ENCODE measurements at regions of chr15 and their contacts with region 1.

Region 1: DNA sequence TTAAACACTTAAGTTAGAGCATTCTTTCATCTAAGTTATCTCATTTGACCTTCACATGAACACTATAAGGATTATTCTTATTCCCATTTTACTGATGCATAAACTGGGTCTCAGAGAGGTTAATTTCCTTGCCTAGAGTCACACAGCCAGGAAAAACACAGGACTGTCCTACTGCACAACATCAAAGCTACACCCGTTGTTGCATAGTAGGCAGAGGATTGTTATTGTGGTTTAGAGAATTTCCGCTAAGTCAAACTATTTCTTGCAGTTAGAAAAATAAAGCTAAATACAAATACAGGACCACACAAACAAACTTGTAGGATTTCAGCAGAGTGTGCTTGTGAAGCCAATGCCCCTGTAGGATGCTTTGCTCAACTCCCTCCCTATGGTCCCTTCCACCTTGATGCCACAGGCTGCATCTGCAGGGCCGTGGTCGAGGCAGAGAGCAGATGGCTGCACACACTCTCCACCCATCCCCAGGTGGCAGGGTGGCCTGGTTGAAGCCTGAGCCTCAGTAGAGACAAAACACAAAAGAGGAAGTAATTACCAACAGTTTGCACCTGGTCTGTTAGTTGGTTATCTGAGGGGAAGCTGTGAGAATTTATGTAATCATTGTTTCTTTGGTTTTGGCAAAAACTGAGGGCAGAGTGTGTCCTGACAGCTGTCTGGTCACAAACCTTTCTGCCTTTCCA is 41.1 kb upstream of the SKOR1 start:
- DNase-seq: peak; percentile 60
- ATAC-seq: peak; percentile 81
- H3K4me3 Mint-ChIP-seq: peak overlapping the region; percentile 38
- H3K27ac Mint-ChIP-seq: peak overlapping the region; percentile 87
- H3K4me1 Mint-ChIP-seq: peaks cover 50% of the 10 kb centered on the region
- H3K27me3 Mint-ChIP-seq: no peaks in the 10 kb centered on the region
- CTCF ChIP-seq: no peak

Region 2: DNA sequence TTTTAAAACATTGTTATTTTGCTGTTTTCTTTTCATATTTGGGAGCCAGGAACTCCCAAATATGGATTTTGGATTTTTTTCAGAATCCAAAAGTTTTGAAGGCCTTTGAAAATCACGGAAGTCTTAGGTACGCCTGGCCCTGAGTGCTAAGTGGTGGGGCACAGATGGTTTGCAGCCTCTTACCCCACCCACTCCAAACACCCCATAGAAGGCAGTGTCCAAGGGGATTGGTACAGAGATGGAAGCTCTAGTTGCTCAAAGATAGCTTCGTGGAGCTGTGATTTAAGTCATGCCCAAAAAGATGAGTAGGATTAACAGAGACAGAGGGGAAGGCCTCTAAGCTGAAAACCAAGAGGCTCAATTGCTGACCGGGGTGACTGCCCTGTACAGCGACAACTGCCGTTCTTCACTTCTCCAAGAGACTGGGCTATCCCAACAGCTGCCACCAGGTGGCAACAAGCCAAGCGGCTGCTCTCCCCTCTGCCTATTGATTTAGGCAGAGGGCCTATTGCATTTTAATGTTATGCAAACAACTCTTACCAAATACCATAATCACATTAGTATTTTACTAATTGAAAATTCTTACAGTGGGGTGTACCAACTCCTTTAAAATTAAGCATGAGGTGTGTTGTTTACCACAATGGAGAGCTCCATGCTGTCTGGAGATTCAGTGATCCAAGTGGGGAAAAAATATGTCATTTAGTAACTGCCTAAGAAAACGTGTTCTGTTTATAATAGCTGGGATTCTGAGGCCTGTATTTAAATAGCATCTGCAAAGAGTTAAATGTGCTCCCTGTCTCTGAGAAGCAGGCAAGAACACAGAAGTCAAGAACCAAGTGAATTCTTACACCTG is 327.3 kb before region 1 on chr15:
- CTCF ChIA-PET with region 1: interaction called, 13 read pairs
- POLR2A ChIA-PET with region 1: no interaction called
- intact Hi-C with region 1: loop called (anchors 1 kb)
- DNase-seq: peak; percentile 70
- ATAC-seq: peak; percentile 97
- H3K4me3 Mint-ChIP-seq: no peak overlapping the region
- H3K27ac Mint-ChIP-seq: no peak overlapping the region
- H3K4me1 Mint-ChIP-seq: no peaks in the 10 kb centered on the region
- H3K27me3 Mint-ChIP-seq: peaks cover 4% of the 10 kb centered on the region
- CTCF ChIP-seq: peak; percentile 85

Region 3: GRCh38 chr15:67521029-67521811 is 263.0 kb before region 1 on chr15 and contains the start of gene C15orf61:
- CTCF ChIA-PET with region 1: no interaction called
- POLR2A ChIA-PET with region 1: interaction called, 4 read pairs
- intact Hi-C with region 1: loop called (anchors 1 kb)
- DNase-seq: peak; percentile 88
- ATAC-seq: peak; percentile 81
- H3K4me3 Mint-ChIP-seq: peak within 1 kb of the TSS; percentile 93
- H3K27ac Mint-ChIP-seq: peak within 1 kb of the TSS; percentile 92
- H3K4me1 Mint-ChIP-seq: peaks cover 22% of the 10 kb centered on the region
- H3K27me3 Mint-ChIP-seq: no peaks in the 10 kb centered on the region
- CTCF ChIP-seq: no peak
- total RNA-seq, gene C15orf61: 3.3 and 4.2 TPM in 2 replicates

Region 4: GRCh38 chr15:67542420-67543347 is 241.6 kb before region 1 on chr15 and contains the start of gene MAP2K5:
- CTCF ChIA-PET with region 1: no interaction called
- POLR2A ChIA-PET with region 1: no interaction called
- intact Hi-C with region 1: loop called (anchors 2 kb)
- DNase-seq: peak; percentile 76
- ATAC-seq: peak; percentile 73
- H3K4me3 Mint-ChIP-seq: peak within 1 kb of the TSS; percentile 94
- H3K27ac Mint-ChIP-seq: peak within 1 kb of the TSS; percentile 94
- H3K4me1 Mint-ChIP-seq: peaks cover 56% of the 10 kb centered on the region
- H3K27me3 Mint-ChIP-seq: peaks cover 5% of the 10 kb centered on the region
- CTCF ChIP-seq: no peak
- total RNA-seq, gene MAP2K5: 18.9 and 26.7 TPM in 2 replicates

Region 5: DNA sequence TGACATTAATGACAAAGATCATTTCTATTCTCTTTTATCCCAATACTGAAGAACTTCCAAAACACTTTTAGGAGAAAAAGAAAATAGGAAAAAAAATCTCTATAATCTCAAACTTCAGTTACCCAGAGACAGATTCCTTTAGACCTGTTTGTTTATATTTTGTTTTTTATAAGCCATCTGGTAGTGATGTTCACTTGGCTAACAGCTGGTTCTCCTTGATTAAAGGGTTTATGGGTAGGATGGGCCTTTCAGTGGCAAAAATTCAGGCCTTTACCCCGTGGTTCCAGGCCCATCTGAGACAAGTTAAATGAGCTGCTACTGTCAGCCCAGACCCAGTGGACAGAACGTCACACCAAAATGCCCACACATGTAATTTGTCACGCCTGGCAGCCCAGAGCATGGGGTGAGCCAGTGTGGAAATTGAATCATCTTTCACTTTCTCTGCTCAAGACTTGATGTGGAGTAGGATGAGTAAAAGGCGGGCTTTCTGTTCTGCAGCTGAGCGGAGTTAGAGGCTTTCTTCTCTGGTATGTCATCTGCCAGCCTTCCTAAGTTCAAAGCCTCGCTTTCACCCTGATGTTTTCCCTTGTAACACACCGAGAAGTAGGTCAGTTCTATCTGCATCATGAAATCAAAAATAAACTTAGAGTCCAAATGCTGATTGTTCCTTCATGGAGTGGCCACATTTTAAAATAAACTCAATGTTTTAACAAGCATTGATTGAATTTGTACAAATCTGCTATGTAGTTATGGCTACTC is 21.4 kb before region 1 on chr15:
- CTCF ChIA-PET with region 1: interaction called, 3 read pairs
- POLR2A ChIA-PET with region 1: interaction called, 4 read pairs
- intact Hi-C with region 1: loop called (anchors 2 kb)
- DNase-seq: no peak
- ATAC-seq: peak; percentile 82
- H3K4me3 Mint-ChIP-seq: peak overlapping the region; percentile 66
- H3K27ac Mint-ChIP-seq: peak overlapping the region; percentile 65
- H3K4me1 Mint-ChIP-seq: peaks cover 67% of the 10 kb centered on the region
- H3K27me3 Mint-ChIP-seq: no peaks in the 10 kb centered on the region
- CTCF ChIP-seq: no peak

Region 6: DNA sequence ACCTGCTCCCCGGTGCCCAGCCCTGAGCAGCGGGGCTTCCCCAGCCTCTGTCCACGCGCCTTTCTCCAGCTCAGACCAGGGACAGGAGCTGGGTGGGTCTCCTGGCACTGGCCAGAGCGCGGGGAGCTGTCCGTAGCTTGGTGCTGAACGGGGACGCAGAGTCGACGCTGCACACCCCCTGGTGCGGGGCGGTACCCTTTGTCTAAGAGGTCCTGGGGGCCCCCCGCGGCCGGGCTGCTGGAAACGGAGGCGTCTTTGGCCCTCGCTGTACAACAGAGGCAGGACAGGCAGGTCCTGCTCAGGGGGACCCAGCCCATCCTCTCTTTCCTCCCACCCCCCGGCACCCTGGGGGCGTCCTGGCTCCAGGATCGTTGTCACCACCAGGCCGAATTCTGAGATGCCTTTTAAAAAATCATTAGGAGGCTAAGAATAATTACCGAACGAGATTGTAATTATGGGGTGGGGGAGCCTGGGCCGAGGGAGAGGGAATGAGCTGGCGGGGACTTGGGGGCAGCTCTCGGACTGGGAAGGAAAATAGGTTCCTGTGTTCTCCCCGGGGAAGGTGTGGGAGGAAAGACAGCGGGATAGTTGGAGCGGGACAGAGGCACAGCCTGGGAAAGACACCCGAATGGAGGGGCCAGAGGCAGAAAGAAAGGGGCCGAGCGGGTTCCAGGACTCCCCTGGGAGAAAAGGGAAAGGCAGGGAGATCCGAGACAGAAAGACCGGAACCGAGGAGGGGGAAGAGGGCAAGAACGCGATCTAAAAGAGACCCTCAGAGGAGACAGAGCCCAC is 37.0 kb after region 1 on chr15:
- CTCF ChIA-PET with region 1: interaction called, 19 read pairs
- POLR2A ChIA-PET with region 1: interaction called, 5 read pairs
- intact Hi-C with region 1: loop called (anchors 1 kb)
- DNase-seq: no peak
- ATAC-seq: peak; percentile 53
- H3K4me3 Mint-ChIP-seq: peak overlapping the region; percentile 19
- H3K27ac Mint-ChIP-seq: peak overlapping the region; percentile 30
- H3K4me1 Mint-ChIP-seq: peaks cover 43% of the 10 kb centered on the region
- H3K27me3 Mint-ChIP-seq: peaks cover 71% of the 10 kb centered on the region
- CTCF ChIP-seq: no peak

Region 7: DNA sequence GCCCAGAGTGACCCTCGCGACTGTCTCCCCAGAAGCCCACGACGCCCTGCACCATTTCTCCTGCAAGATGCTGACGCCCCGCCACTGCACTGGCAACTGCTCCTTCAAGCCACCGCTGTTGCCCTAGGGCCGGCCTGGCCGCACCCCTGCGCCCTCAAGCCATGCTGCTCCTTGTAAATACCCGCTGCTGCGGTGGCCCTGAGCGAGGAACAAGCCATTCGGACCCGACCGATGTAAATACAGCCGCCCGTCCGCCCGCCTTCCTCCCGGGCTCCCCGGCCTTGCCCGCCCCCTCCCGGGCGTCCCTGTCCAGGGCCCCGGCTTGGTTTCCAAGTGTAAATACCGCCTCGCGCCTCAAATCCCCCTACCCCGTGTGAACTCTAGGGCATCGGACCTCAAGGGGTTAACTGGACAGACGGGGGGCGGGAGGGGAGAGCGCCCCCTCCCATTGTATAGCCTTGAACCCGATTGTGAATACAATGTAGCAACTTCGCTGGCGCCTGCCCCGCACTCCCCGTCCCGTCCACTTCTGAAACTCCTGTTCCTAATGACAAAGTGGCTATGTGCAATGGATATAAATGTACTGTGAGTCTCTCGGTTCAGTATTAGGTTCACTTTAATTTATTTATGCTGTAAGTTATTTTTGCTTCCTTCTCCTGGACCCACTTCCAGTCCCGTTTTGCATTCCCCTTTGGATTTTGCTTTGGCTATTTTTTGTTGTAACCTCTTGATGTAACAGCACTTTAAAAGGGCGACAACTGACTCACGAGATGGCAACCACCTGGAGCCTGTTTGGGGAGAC is 49.7 kb after region 1 on chr15:
- CTCF ChIA-PET with region 1: interaction called, 56 read pairs
- POLR2A ChIA-PET with region 1: interaction called, 12 read pairs
- intact Hi-C with region 1: loop called (anchors 1 kb)
- DNase-seq: peak; percentile 41
- ATAC-seq: peak; percentile 40
- H3K4me3 Mint-ChIP-seq: peak overlapping the region; percentile 79
- H3K27ac Mint-ChIP-seq: no peak overlapping the region
- H3K4me1 Mint-ChIP-seq: peaks cover 50% of the 10 kb centered on the region
- H3K27me3 Mint-ChIP-seq: peaks cover 54% of the 10 kb centered on the region
- CTCF ChIP-seq: no peak

Region 8: GRCh38 chr15:68126396-68126795 is 342.2 kb after region 1 on chr15:
- CTCF ChIA-PET with region 1: no interaction called
- POLR2A ChIA-PET with region 1: no interaction called
- intact Hi-C with region 1: no loop called
- DNase-seq: no peak
- ATAC-seq: no peak
- H3K4me3 Mint-ChIP-seq: no peak overlapping the region
- H3K27ac Mint-ChIP-seq: no peak overlapping the region
- H3K4me1 Mint-ChIP-seq: peaks cover 10% of the 10 kb centered on the region
- H3K27me3 Mint-ChIP-seq: no peaks in the 10 kb centered on the region
- CTCF ChIP-seq: no peak